ENCODE measurements at regions of chr13 and their contacts with region 1.

Region 1: GRCh38 chr13:50081679-50082425 is 66.6 kb downstream of the KCNRG start:
- DNase-seq: peak; percentile 96
- ATAC-seq: peak; percentile 86
- H3K4me3 ChIP-seq: peak overlapping the region; percentile 78 to 93 (median 91)
- H3K27ac ChIP-seq: peak overlapping the region; percentile 96
- H3K4me1 ChIP-seq: peaks cover 45% of the 10 kb centered on the region
- H3K27me3 ChIP-seq: no peaks in the 10 kb centered on the region; a peak in 1 of 5 replicates
- CTCF ChIP-seq: peak; percentile 19; the same call in 1 of the 2 replicates
- EP300 ChIP-seq: no peak
- POLR2A ChIP-seq: peak; percentile 55 to 63; a peak in 3 of 4 replicates
- RAD21 ChIP-seq: 0 out of 2 replicates have a peak, but pooled peaks have one; percentile 2

Region 2: GRCh38 chr13:49976314-49977258 is 105.3 kb before region 1 on chr13:
- CTCF ChIA-PET with region 1: no interaction called
- POLR2A ChIA-PET with region 1: interaction called, 3 read pairs
- in situ Hi-C with region 1: no loop called
- intact Hi-C with region 1: loop called (anchors 5 kb)
- DNase-seq: peak; percentile 65
- ATAC-seq: peak; percentile 87
- H3K4me3 ChIP-seq: peak overlapping the region in 1 of 3 experiments; percentile 4; a peak in 1 of 6 replicates
- H3K27ac ChIP-seq: no peak overlapping the region
- H3K4me1 ChIP-seq: peaks cover 24% of the 10 kb centered on the region
- H3K27me3 ChIP-seq: no peaks in the 10 kb centered on the region
- CTCF ChIP-seq: peak; percentile 94
- EP300 ChIP-seq: no peak
- POLR2A ChIP-seq: no peak
- RAD21 ChIP-seq: peak; percentile 81

Region 3: GRCh38 chr13:50123862-50124536 is 42.1 kb after region 1 on chr13:
- CTCF ChIA-PET with region 1: no interaction called
- POLR2A ChIA-PET with region 1: interaction called, 74 read pairs
- in situ Hi-C with region 1: no loop called
- intact Hi-C with region 1: loop called (anchors 2 kb)
- DNase-seq: peak; percentile 90
- ATAC-seq: peak; percentile 75
- H3K4me3 ChIP-seq: peak overlapping the region; percentile 67 to 95 (median 86)
- H3K27ac ChIP-seq: peak overlapping the region; percentile 98
- H3K4me1 ChIP-seq: peaks cover 34% of the 10 kb centered on the region
- H3K27me3 ChIP-seq: peaks cover 0 to 5% of the 10 kb centered on the region in 2 experiments; a peak in 1 of 5 replicates
- CTCF ChIP-seq: peak; percentile 40
- EP300 ChIP-seq: no peak
- POLR2A ChIP-seq: peak in 1 of 2 experiments; percentile 74; a peak in 2 of 4 replicates
- RAD21 ChIP-seq: peak; percentile 75

Region 4: GRCh38 chr13:50189450-50189849 is 107.6 kb after region 1 on chr13:
- CTCF ChIA-PET with region 1: no interaction called
- POLR2A ChIA-PET with region 1: no interaction called
- in situ Hi-C with region 1: no loop called
- intact Hi-C with region 1: loop called (anchors 5 kb)
- DNase-seq: no peak
- ATAC-seq: no peak
- H3K4me3 ChIP-seq: no peak overlapping the region
- H3K27ac ChIP-seq: peak overlapping the region; percentile 0
- H3K4me1 ChIP-seq: peaks cover 58% of the 10 kb centered on the region
- H3K27me3 ChIP-seq: no peaks in the 10 kb centered on the region; a peak in 1 of 5 replicates
- CTCF ChIP-seq: no peak; the same call in 1 of the 2 replicates
- EP300 ChIP-seq: no peak
- POLR2A ChIP-seq: no peak
- RAD21 ChIP-seq: no peak

Region 5: DNA sequence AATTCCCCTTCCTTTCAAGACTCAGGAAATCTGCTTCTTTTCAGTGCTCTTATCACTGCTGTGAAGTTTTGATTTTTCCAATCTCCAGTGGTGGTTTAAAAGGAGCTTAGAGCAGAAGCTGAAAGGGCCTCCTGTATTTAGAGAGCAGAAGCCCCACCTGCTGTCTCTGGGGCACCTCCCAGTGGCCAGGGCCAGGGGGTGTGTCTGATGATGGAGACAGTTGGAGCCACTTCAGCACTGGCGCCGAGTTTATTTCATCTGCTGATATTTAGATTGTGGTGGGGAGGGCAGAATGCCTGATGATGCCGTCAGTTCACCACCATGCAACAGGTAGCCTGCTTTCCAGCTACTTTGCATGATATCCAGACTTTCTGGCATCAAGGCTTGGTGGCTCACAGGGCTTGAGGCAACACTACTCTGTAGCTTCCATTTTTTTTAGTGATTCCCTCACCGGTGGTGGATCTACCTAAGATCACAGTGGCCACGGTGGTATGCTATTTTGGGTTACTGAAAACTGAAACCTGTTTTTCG is 305.3 kb after region 1 on chr13:
- CTCF ChIA-PET with region 1: no interaction called
- POLR2A ChIA-PET with region 1: no interaction called
- in situ Hi-C with region 1: no loop called
- intact Hi-C with region 1: loop called (anchors 2 kb)
- DNase-seq: peak; percentile 25
- ATAC-seq: peak; percentile 86
- H3K4me3 ChIP-seq: no peak overlapping the region
- H3K27ac ChIP-seq: no peak overlapping the region
- H3K4me1 ChIP-seq: peaks cover 27% of the 10 kb centered on the region
- H3K27me3 ChIP-seq: no peaks in the 10 kb centered on the region; a peak in 1 of 5 replicates
- CTCF ChIP-seq: peak; percentile 46
- EP300 ChIP-seq: no peak
- POLR2A ChIP-seq: no peak
- RAD21 ChIP-seq: peak; percentile 36; the same call in 1 of the 2 replicates

Region 6: DNA sequence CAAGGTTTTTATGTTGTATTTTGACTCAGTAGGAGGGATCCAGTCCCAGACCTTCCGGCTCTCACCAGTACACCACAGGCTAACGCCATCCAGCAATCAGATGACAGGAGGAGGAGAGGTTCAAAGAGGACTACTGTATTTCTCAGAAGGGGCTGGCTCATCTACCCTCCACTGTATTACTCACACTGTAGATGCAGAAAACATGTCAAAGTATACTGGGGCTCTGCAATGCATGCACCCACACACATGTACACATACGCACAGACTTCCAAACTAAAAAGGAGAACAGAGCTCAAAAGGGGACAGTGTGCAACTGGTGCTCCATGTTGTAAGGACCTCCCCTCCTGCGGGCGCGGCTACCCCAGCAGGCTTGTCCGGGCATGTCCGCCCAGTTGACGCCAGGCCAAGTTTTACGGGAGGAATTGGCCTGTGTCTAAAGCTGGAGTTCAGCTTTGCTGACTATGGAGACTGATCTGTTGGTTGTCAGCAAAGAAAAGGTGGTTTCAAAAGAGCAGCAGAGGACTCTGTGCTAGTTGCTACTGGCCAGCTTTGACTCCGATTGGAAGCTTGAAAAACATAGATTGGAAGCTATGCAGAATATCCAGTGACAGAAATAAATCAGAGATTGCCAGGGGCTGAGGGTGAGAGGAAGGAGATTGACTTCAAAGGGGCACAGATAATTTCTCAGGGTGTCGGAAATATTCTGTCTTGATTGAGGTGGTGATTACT is 447.5 kb after region 1 on chr13:
- CTCF ChIA-PET with region 1: interaction called, 3 read pairs
- POLR2A ChIA-PET with region 1: no interaction called
- in situ Hi-C with region 1: no loop called
- intact Hi-C with region 1: loop called (anchors 2 kb)
- DNase-seq: no peak
- ATAC-seq: no peak; the same call in 2 of the 3 replicates
- H3K4me3 ChIP-seq: no peak overlapping the region
- H3K27ac ChIP-seq: peak overlapping the region; percentile 34
- H3K4me1 ChIP-seq: peaks cover 10% of the 10 kb centered on the region
- H3K27me3 ChIP-seq: no peaks in the 10 kb centered on the region
- CTCF ChIP-seq: no peak
- EP300 ChIP-seq: no peak
- POLR2A ChIP-seq: no peak
- RAD21 ChIP-seq: no peak

Region 7: DNA sequence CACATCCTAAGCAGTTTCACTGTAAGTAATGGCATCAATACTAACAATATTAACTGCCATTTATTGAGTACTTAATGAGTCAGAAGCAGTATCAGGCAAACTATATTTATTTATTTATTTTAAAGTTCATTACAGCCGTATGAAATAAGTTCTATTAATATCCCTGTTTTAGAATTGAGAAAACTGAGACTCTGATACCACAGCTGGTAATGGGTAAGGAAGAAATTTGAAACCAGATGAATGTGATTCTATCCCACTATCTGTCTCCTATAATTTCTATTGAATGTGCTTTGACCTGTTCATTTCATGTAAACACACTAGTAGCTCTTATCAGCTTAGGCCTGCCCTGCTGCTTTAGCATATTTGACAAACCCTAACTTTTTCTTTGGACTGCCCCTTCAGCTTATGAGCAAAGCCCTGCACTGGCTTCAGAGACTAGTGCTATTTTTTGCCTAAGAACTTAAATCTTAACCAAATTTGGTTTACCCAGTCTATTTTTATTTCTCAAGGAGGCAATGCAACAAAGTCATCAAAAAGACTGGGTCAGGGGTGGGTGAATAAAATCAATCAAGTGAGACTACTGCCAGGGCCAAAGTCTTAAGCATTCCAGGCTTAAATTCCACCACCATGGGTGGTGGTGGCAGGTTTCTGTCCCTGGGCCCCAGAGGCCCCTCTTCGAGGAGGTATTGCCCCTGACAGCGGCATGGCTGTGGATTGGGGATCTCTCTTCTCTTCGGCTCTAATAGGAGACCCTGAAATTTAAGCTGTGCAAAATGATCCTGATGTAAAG is 618.2 kb after region 1 on chr13:
- CTCF ChIA-PET with region 1: no interaction called
- POLR2A ChIA-PET with region 1: no interaction called
- in situ Hi-C with region 1: no loop called
- intact Hi-C with region 1: no loop called
- DNase-seq: no peak
- ATAC-seq: peak; percentile 66
- H3K4me3 ChIP-seq: no peak overlapping the region
- H3K27ac ChIP-seq: no peak overlapping the region
- H3K4me1 ChIP-seq: no peaks in the 10 kb centered on the region
- H3K27me3 ChIP-seq: no peaks in the 10 kb centered on the region
- CTCF ChIP-seq: no peak
- EP300 ChIP-seq: no peak
- POLR2A ChIP-seq: no peak
- RAD21 ChIP-seq: no peak

Region 8: DNA sequence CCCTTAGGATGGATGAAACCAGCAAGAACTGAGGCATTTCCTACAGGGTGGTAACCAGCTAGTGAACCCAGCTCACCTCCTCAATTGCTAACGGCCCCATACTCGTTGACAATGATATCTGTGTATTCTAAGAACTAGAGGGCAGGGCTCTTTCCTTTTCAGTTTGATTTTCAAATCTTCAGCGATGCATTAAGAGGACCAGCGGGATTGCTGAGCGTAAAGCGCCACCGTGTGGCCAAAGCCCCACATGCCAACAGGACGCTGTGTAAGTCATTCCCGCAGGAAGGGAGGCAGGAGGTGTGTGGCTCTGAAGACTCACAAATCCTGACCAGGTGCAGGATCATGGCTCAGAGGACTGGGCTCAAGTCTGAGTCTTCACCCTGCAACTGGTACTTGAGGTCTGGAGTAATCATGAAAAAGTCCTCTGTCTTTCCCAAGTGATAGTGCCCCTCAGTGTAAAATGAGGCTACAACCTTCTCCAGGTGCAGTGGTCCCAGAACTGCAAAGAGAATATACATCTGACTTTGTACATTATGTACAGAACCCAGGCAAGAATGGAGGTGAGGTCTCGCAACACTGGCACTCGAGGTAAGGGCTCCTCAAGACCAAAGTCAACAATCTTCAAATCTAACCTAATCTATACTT is 988.3 kb after region 1 on chr13:
- CTCF ChIA-PET with region 1: no interaction called
- POLR2A ChIA-PET with region 1: no interaction called
- in situ Hi-C with region 1: no loop called
- intact Hi-C with region 1: loop called (anchors 5 kb)
- DNase-seq: peak; percentile 44
- ATAC-seq: peak; percentile 95
- H3K4me3 ChIP-seq: no peak overlapping the region
- H3K27ac ChIP-seq: no peak overlapping the region
- H3K4me1 ChIP-seq: peaks cover 10% of the 10 kb centered on the region
- H3K27me3 ChIP-seq: peaks cover 0 to 21% of the 10 kb centered on the region in 2 experiments; a peak in 4 of 5 replicates
- CTCF ChIP-seq: peak; percentile 95
- EP300 ChIP-seq: no peak
- POLR2A ChIP-seq: no peak
- RAD21 ChIP-seq: peak; percentile 91

Measured in HepG2 (cell line).